GM18951 (cell line): ENCODE measurements at regions of chr11 and their contacts with region 1.

Region 1: DNA sequence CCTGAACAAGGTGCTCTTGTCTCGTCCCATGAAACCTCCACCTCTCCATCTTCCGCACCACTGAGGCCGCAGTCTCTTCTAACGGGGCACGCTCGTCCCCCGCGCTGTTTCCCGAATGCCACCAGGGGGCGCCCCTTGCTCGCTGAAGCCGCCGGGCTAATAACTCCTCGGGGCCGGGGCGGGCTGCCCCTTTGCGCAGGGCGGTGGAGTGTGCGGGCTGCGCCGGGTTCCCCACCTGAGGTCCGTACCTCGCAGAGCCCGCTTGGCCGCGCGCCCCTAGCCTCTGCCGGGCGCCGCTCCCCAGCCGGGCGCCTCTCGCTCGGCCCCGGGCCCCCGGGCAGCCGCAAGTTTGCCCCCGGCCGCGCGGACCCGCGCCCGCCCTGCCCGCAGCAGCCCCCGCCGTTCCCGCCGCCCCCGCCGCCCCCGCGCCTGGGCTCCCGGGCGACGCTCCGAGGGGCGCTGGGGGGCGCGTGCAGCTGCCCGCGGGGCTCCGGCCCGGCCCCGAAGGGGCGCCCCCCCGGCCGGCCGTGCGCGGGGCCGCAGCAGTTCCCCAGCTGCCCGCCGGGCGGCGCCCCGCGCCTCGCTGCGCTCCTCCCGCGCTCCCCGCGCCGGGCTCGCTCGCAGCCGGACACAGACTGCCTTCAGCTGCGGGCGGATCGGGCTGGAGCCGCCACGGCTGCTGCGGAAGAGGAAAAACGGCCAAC is at the start of gene GRIK4:
- POLR2A ChIP-seq: no peak

Region 2: DNA sequence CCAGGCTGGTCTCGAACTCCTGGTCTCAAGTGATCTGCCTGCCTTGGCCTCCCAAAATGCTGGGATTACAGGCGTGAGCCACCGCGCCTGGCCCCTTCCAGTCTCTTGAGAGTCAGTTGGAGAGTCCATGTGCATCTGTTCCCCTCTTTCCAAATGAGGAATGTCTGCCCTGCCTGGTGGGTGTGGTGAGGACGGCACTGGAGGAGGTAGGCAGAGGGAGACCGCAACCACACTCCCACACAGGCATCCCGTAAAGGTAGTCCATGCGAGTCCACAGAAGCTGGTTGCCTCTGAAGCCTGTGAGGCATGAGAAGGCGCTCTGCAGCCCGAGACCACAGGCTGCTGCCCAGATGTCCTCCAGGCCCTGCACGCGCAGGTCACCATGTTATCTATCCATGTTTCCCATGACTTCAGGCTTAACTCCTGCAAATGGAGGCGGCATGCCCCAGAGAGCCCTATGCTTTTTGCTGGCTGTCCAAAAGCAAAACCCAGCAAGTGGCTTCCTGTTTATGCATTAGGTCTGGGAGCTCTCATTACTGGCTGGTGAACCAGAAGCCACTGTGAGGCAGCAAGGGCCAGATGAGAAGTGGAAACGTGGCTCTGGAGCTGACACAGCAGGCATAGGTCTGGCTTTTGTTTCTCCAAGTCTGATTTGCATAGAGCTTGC is 43.6 kb after region 1 on chr11:
- in situ Hi-C with region 1: no loop called
- POLR2A ChIP-seq: no peak

Region 3: GRCh38 chr11:120688163-120688562 is 176.9 kb after region 1 on chr11:
- in situ Hi-C with region 1: loop called (anchors 5 kb)
- POLR2A ChIP-seq: no peak

Region 4: DNA sequence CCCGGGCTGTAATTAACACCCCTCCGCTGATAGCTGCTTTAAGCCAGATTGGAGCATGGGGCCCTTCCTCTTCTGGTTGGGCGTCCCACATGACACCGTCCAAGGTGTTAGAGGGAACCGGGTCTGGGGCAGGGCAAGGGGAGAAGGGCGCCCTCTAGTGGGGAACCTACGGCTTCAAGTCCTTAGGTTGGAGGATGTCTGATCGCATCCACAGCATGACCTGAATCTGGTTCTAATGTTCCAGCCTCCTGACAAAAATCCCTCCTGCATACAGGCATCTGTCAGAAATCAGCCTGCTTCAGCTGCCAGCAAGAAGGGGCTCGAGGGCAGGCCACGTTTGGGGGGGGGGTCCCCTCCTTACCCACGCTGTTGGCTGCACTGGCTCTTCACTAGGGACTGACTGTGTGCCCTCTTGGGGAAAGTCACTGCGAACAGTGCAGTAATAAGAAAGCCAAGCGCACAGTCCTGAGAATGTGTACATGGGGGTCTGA is 418.4 kb after region 1 on chr11:
- in situ Hi-C with region 1: loop called (anchors 10 kb)
- POLR2A ChIP-seq: no peak